K562 (cell line): ENCODE measurements at regions of chr6 and their contacts with region 1.

Region 1: GRCh38 chr6:134047673-134048072 is 4.8 kb downstream of the SLC2A12 start:
- DNase-seq: no peak
- ATAC-seq: no peak
- H3K4me3 ChIP-seq: no peak overlapping the region
- H3K27ac ChIP-seq: no peak overlapping the region
- H3K4me1 ChIP-seq: peaks cover 4 to 9% of the 10 kb centered on the region in 2 experiments; a peak in 4 of 5 replicates
- H3K27me3 ChIP-seq: no peaks in the 10 kb centered on the region
- CTCF ChIP-seq: no peak
- EP300 ChIP-seq: no peak
- POLR2A ChIP-seq: no peak
- RAD21 ChIP-seq: no peak

Region 2: DNA sequence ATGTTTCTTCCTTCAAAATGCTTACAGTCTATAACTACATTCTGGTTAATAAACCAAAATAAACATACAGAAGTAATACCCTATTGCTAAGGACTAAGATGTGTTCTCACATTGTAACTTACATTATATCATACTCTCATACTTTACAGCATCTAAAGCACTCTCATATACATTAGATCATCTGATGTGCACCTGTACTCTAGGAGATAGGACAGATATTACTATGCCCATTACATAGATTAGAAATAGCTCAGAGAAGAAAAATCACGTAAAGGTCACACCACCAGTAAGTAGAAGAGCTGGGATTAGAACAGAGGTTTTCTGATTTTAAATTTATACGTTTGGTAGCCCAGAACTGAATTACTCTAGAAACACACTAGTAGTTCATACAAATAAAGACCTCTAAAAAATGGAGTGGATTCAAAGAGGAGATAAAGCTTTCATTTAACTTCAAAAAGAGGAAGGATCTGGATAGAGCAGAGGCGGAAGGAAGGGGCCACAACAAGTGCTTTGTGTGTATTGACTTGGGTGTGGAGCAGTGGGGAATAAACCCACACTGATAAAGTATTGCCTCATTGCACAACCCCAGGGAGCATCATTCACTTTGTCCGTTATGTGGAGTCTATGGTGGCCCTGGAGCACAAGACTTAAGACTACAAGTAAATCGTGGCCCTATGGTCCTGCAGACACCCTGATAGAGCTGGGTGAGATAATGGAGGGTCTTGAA is 26.1 kb before region 1 on chr6:
- CTCF ChIA-PET with region 1: no interaction called
- POLR2A ChIA-PET with region 1: interaction called, 3 read pairs
- in situ Hi-C with region 1: no loop called
- intact Hi-C with region 1: loop called (anchors 2 kb)
- DNase-seq: peak in 2 of 4 experiments; percentile 24 to 29
- ATAC-seq: peak; percentile 41
- H3K4me3 ChIP-seq: no peak overlapping the region
- H3K27ac ChIP-seq: no peak overlapping the region
- H3K4me1 ChIP-seq: peaks cover 4 to 26% of the 10 kb centered on the region in 2 experiments
- H3K27me3 ChIP-seq: no peaks in the 10 kb centered on the region
- CTCF ChIP-seq: no peak
- EP300 ChIP-seq: peak; percentile 71
- POLR2A ChIP-seq: no peak
- RAD21 ChIP-seq: no peak

Region 3: GRCh38 chr6:134063966-134064445 is 16.3 kb after region 1 on chr6:
- CTCF ChIA-PET with region 1: no interaction called
- POLR2A ChIA-PET with region 1: interaction called, 10 read pairs
- in situ Hi-C with region 1: no loop called
- intact Hi-C with region 1: no loop called
- DNase-seq: peak; percentile 65 to 88 (median 74)
- ATAC-seq: peak; percentile 94
- H3K4me3 ChIP-seq: no peak overlapping the region
- H3K27ac ChIP-seq: peak overlapping the region; percentile 40; the same call in 1 of the 3 replicates
- H3K4me1 ChIP-seq: peaks cover 6 to 18% of the 10 kb centered on the region in 2 experiments; a peak in 3 of 5 replicates
- H3K27me3 ChIP-seq: no peaks in the 10 kb centered on the region
- CTCF ChIP-seq: peak; percentile 90 to 99 (median 99)
- EP300 ChIP-seq: no peak
- POLR2A ChIP-seq: no peak
- RAD21 ChIP-seq: peak; percentile 76 to 89